Naive thymus-derived CD4-positive, alpha-beta T cell (primary cell): ENCODE measurements at regions of chr7 and their contacts with region 1.

Region 1: GRCh38 chr7:38398725-38399321 is 125.4 kb upstream of the TARP start:
- DNase-seq: peak in 8 of 9 donors; percentile 21 to 66 (median 44)
- ATAC-seq: peak; percentile 80
- H3K4me3 ChIP-seq: no peak overlapping the region
- H3K4me3 Mint-ChIP-seq: no peak overlapping the region
- H3K27ac ChIP-seq: no peak overlapping the region
- H3K27ac Mint-ChIP-seq: no peak overlapping the region
- H3K4me1 ChIP-seq: peaks cover 0 to 4% of the 10 kb centered on the region in 2 donors
- H3K4me1 Mint-ChIP-seq: peaks cover 0 to 11% (median 8%) of the 10 kb centered on the region in 7 donors
- H3K27me3 ChIP-seq: no peaks in the 10 kb centered on the region
- H3K27me3 Mint-ChIP-seq: peaks cover 0 to 22% (median 8%) of the 10 kb centered on the region in 5 donors

Region 2: GRCh38 chr7:36605261-36606051 is 1793.4 kb before region 1 on chr7:
- CTCF ChIA-PET with region 1: no interaction called
- POLR2A ChIA-PET with region 1: no interaction called
- intact Hi-C with region 1: no loop called
- DNase-seq: peak in 5 of 9 donors; percentile 9 to 25 (median 20)
- ATAC-seq: no peak
- H3K4me3 ChIP-seq: no peak overlapping the region
- H3K4me3 Mint-ChIP-seq: peak overlapping the region in 8 of 10 donors; percentile 57 to 86 (median 66)
- H3K27ac ChIP-seq: peak overlapping the region; percentile 31
- H3K27ac Mint-ChIP-seq: peak overlapping the region in 8 of 9 donors; percentile 64 to 93 (median 90)
- H3K4me1 ChIP-seq: peaks cover 0 to 49% of the 10 kb centered on the region in 2 donors
- H3K4me1 Mint-ChIP-seq: peaks cover 41 to 84% (median 69%) of the 10 kb centered on the region in 7 donors
- H3K27me3 ChIP-seq: no peaks in the 10 kb centered on the region
- H3K27me3 Mint-ChIP-seq: no peaks in the 10 kb centered on the region

Region 3: DNA sequence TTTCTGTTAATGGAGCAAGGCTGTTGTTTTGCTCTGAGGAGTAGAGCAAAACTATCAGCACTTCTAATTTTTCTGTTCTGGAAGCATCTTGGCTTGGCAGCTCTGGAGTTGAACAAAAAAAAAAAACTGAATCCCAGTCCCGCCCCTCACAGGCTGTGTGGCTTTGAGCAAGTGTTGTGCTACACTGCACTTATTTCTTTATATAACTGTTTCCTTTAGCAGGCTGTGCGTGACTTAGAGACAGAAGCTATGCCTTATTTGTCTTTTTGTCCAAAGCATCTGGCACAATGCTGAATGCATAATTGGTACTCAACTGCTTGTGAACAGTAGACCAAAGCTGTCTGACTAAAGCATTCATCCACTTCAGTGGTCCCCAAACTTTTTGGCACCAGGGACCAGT is 136.2 kb after region 1 on chr7:
- CTCF ChIA-PET with region 1: interaction called, 3 read pairs
- POLR2A ChIA-PET with region 1: no interaction called
- intact Hi-C with region 1: loop called (anchors 1 to 2 kb)
- DNase-seq: no peak
- ATAC-seq: no peak
- H3K4me3 ChIP-seq: no peak overlapping the region
- H3K4me3 Mint-ChIP-seq: no peak overlapping the region
- H3K27ac ChIP-seq: no peak overlapping the region
- H3K27ac Mint-ChIP-seq: no peak overlapping the region
- H3K4me1 ChIP-seq: no peaks in the 10 kb centered on the region
- H3K4me1 Mint-ChIP-seq: peaks cover 0 to 8% (median 0%) of the 10 kb centered on the region in 7 donors
- H3K27me3 ChIP-seq: no peaks in the 10 kb centered on the region
- H3K27me3 Mint-ChIP-seq: peaks cover 6 to 17% (median 10%) of the 10 kb centered on the region in 5 donors

Region 4: DNA sequence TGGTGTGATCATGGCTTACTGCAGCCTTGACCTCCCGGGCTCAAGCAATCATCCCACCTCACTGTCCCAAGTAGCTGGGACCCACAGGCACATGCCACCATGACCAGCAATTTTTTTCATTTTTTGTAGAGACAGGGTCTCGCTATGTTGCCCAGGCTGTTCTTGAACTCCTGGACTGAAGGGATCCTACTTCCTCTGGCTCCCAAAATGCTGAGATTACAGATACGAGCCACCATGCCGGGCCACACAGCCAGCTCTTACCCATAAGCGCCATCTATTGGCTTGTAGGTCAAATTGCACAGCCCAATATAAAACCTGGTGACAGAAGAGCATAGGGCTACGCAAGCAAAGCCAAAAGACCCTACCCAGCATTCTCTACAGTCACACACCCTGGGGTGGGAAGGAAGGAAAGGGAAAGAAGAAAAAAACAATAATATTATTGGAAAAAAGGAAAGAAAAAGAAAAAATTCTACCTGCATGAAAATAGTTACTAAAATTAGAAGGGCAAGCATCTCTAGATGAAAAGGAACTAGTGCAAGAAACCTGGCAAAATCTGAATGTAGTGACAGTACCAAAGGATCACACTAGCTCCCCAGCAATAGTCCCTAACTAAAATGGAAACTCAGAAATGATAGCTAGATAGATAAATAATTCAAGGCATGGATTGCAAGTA is 261.7 kb after region 1 on chr7:
- CTCF ChIA-PET with region 1: interaction called, 21 read pairs
- POLR2A ChIA-PET with region 1: no interaction called
- intact Hi-C with region 1: loop called (anchors 1 kb)
- DNase-seq: peak in 7 of 9 donors; percentile 7 to 51 (median 30)
- ATAC-seq: peak; percentile 78
- H3K4me3 ChIP-seq: no peak overlapping the region
- H3K4me3 Mint-ChIP-seq: no peak overlapping the region
- H3K27ac ChIP-seq: no peak overlapping the region
- H3K27ac Mint-ChIP-seq: no peak overlapping the region
- H3K4me1 ChIP-seq: no peaks in the 10 kb centered on the region
- H3K4me1 Mint-ChIP-seq: no peaks in the 10 kb centered on the region
- H3K27me3 ChIP-seq: no peaks in the 10 kb centered on the region
- H3K27me3 Mint-ChIP-seq: peaks cover 20 to 31% (median 27%) of the 10 kb centered on the region in 5 donors

Region 5: DNA sequence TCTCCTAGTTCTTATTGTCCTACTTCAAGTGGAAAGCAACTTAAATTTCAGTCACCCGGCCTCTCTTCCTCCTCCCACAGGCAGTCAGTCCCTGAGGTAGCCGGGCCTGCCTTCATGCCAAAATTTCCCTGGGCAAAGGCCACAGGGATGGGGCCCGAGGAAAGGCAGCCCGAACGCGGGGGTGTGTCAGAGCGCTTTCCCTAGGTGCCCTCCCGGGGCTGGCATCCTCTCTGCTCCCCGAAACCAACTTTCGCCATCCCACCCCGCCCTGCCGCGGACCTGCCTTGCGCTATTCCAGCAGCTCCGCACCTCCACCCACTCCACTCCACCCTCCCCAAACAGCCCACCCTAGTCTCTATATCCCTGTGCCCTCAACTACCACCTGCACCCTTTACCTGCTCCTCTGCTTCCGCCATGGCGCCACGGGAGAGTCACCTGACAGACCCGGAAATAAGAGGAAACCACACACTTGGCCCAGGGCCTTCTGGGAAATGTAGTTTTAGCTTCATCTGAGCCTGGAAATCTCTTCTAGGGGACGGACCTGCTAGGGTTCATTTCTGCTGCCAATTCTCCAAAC is 510.0 kb after region 1 on chr7 and contains the start of gene VPS41:
- CTCF ChIA-PET with region 1: no interaction called
- POLR2A ChIA-PET with region 1: no interaction called
- intact Hi-C with region 1: loop called in 1 of 2 experiments (anchors 10 kb)
- DNase-seq: peak; percentile 42 to 89 (median 85)
- ATAC-seq: peak; percentile 99
- H3K4me3 ChIP-seq: peak within 1 kb of the TSS; percentile 79
- H3K4me3 Mint-ChIP-seq: peak within 1 kb of the TSS; percentile 92 to 99 (median 97)
- H3K27ac ChIP-seq: peak within 1 kb of the TSS; percentile 72
- H3K27ac Mint-ChIP-seq: peak within 1 kb of the TSS; percentile 82 to 97 (median 91)
- H3K4me1 ChIP-seq: peaks cover 3 to 7% of the 10 kb centered on the region in 2 donors
- H3K4me1 Mint-ChIP-seq: peaks cover 17 to 41% (median 37%) of the 10 kb centered on the region in 7 donors
- H3K27me3 ChIP-seq: no peaks in the 10 kb centered on the region
- H3K27me3 Mint-ChIP-seq: peaks cover 0 to 5% (median 0%) of the 10 kb centered on the region in 5 donors
- total RNA-seq, gene VPS41: 37.1 to 65.0 (median 64.5) TPM

Region 6: GRCh38 chr7:39517240-39517639 is 1118.4 kb after region 1 on chr7:
- CTCF ChIA-PET with region 1: no interaction called
- POLR2A ChIA-PET with region 1: no interaction called
- intact Hi-C with region 1: loop called (anchors 1 kb)
- DNase-seq: no peak
- ATAC-seq: no peak
- H3K4me3 ChIP-seq: no peak overlapping the region
- H3K4me3 Mint-ChIP-seq: no peak overlapping the region
- H3K27ac ChIP-seq: no peak overlapping the region
- H3K27ac Mint-ChIP-seq: no peak overlapping the region
- H3K4me1 ChIP-seq: no peaks in the 10 kb centered on the region
- H3K4me1 Mint-ChIP-seq: peaks cover 0 to 3% (median 0%) of the 10 kb centered on the region in 7 donors
- H3K27me3 ChIP-seq: no peaks in the 10 kb centered on the region
- H3K27me3 Mint-ChIP-seq: peaks cover 2 to 11% (median 5%) of the 10 kb centered on the region in 5 donors